MCF 10A (cell line): ENCODE measurements at regions of chr17 and their contacts with region 1.

Region 1: GRCh38 chr17:50397111-50397918 is at the start of gene LRRC59:
- DNase-seq: peak; percentile 82
- H3K4me3 Mint-ChIP-seq: peak within 1 kb of the TSS; percentile 96
- H3K27ac Mint-ChIP-seq: peak within 1 kb of the TSS; percentile 90
- H3K4me1 Mint-ChIP-seq: peaks cover 20% of the 10 kb centered on the region
- H3K27me3 Mint-ChIP-seq: no peaks in the 10 kb centered on the region
- CTCF ChIP-seq: peak; percentile 96
- total RNA-seq, gene LRRC59: 306 and 344 TPM in 2 replicates

Region 2: GRCh38 chr17:49822829-49823228 is 574.5 kb before region 1 on chr17:
- CTCF ChIA-PET with region 1: no interaction called
- POLR2A ChIA-PET with region 1: no interaction called
- intact Hi-C with region 1: no loop called
- DNase-seq: no peak
- H3K4me3 Mint-ChIP-seq: no peak overlapping the region
- H3K27ac Mint-ChIP-seq: no peak overlapping the region
- H3K4me1 Mint-ChIP-seq: no peaks in the 10 kb centered on the region
- H3K27me3 Mint-ChIP-seq: no peaks in the 10 kb centered on the region
- CTCF ChIP-seq: no peak

Region 3: GRCh38 chr17:50345432-50346312 is 51.6 kb before region 1 on chr17 and contains the start of gene XYLT2:
- CTCF ChIA-PET with region 1: interaction called, 3 read pairs
- POLR2A ChIA-PET with region 1: interaction called, 15 read pairs
- intact Hi-C with region 1: no loop called
- DNase-seq: peak; percentile 78
- H3K4me3 Mint-ChIP-seq: peak within 1 kb of the TSS; percentile 88
- H3K27ac Mint-ChIP-seq: peak within 1 kb of the TSS; percentile 90
- H3K4me1 Mint-ChIP-seq: peaks cover 14% of the 10 kb centered on the region
- H3K27me3 Mint-ChIP-seq: no peaks in the 10 kb centered on the region
- CTCF ChIP-seq: no peak
- total RNA-seq, gene XYLT2: 9.6 and 14.0 TPM in 2 replicates

Region 4: DNA sequence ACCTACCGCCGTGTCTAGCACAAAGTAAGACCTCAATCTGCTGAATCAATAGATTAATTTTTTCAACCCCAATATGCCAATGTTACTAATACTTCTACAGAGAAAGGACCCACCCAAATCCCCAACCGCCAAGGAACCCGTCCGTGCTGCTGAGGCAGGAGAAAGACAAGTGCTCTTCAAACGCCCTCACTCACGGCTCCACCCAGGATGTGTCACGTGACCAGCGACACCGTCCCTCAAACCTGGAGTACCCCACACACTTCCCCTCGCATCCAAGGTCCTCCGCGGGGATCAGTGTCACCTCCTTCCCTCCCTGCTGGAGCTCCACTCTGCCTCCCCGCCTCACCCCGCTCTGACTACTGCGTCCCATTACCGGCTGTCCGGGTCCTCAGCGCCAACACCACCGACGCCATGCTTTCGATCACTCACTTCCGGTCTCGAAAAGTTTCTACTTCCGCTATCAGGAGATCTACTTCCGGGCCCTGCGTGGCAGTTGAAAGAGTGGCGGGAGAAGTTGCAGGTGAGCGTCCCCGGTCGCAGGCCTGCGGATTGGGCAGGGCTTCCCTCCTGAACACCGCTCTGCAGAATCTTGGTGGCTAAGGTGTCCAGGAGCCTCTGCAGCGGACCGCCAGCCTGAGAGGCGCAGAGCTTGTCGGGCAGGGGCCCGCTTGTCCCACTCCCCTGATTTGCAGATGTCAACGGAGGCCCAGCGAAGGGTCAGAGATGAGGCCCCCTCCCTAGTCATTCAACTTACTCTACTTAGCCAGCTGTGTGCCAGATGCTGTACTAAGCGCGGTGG is 24.4 kb before region 1 on chr17 and contains the starts of genes EME1 and MRPL27:
- CTCF ChIA-PET with region 1: interaction called, 27 read pairs
- POLR2A ChIA-PET with region 1: interaction called, 54 read pairs
- intact Hi-C with region 1: no loop called
- DNase-seq: peak; percentile 90
- H3K4me3 Mint-ChIP-seq: peak within 1 kb of the TSS; percentile 91
- H3K27ac Mint-ChIP-seq: peak within 1 kb of the TSS; percentile 97
- H3K4me1 Mint-ChIP-seq: peaks cover 12% of the 10 kb centered on the region
- H3K27me3 Mint-ChIP-seq: no peaks in the 10 kb centered on the region
- CTCF ChIP-seq: no peak
- total RNA-seq, gene EME1: 6.0 and 6.7 TPM in 2 replicates
- total RNA-seq, gene MRPL27: 57.2 and 71.5 TPM in 2 replicates

Region 5: GRCh38 chr17:50386510-50386909 is 10.8 kb before region 1 on chr17:
- CTCF ChIA-PET with region 1: interaction called, 37 read pairs
- POLR2A ChIA-PET with region 1: interaction called, 22 read pairs
- intact Hi-C with region 1: no loop called
- DNase-seq: no peak
- H3K4me3 Mint-ChIP-seq: no peak overlapping the region
- H3K27ac Mint-ChIP-seq: no peak overlapping the region
- H3K4me1 Mint-ChIP-seq: peaks cover 5% of the 10 kb centered on the region
- H3K27me3 Mint-ChIP-seq: no peaks in the 10 kb centered on the region
- CTCF ChIP-seq: no peak

Region 6: DNA sequence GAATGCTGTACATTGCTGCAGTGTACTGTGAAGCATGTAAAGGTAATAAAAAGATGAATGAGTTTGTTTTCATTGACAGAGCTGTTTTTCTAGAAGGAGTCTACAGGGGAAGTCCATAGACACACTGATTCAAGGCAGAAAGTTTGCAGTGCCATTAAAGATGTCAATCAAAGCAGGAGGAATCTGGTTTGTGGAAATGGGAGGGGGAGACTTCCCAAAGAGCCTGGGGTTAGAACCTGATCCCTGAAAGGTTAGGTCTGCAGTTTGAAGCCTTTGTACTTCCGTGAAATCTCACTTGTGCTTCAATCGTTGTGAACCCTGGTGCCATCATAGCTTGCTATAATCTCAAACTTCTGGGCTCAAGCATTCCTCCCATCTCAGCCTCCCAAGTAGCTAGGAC is 33.9 kb after region 1 on chr17:
- CTCF ChIA-PET with region 1: interaction called, 37 read pairs
- POLR2A ChIA-PET with region 1: interaction called, 75 read pairs
- intact Hi-C with region 1: no loop called
- DNase-seq: no peak
- H3K4me3 Mint-ChIP-seq: no peak overlapping the region
- H3K27ac Mint-ChIP-seq: no peak overlapping the region
- H3K4me1 Mint-ChIP-seq: peaks cover 15% of the 10 kb centered on the region
- H3K27me3 Mint-ChIP-seq: no peaks in the 10 kb centered on the region
- CTCF ChIP-seq: no peak

Region 7: GRCh38 chr17:50487213-50488096 is 90.1 kb after region 1 on chr17:
- CTCF ChIA-PET with region 1: interaction called, 3 read pairs
- POLR2A ChIA-PET with region 1: interaction called, 11 read pairs
- intact Hi-C with region 1: no loop called
- DNase-seq: peak; percentile 90
- H3K4me3 Mint-ChIP-seq: no peak overlapping the region
- H3K27ac Mint-ChIP-seq: peak overlapping the region; percentile 55
- H3K4me1 Mint-ChIP-seq: peaks cover 27% of the 10 kb centered on the region
- H3K27me3 Mint-ChIP-seq: no peaks in the 10 kb centered on the region
- CTCF ChIP-seq: no peak

Region 8: DNA sequence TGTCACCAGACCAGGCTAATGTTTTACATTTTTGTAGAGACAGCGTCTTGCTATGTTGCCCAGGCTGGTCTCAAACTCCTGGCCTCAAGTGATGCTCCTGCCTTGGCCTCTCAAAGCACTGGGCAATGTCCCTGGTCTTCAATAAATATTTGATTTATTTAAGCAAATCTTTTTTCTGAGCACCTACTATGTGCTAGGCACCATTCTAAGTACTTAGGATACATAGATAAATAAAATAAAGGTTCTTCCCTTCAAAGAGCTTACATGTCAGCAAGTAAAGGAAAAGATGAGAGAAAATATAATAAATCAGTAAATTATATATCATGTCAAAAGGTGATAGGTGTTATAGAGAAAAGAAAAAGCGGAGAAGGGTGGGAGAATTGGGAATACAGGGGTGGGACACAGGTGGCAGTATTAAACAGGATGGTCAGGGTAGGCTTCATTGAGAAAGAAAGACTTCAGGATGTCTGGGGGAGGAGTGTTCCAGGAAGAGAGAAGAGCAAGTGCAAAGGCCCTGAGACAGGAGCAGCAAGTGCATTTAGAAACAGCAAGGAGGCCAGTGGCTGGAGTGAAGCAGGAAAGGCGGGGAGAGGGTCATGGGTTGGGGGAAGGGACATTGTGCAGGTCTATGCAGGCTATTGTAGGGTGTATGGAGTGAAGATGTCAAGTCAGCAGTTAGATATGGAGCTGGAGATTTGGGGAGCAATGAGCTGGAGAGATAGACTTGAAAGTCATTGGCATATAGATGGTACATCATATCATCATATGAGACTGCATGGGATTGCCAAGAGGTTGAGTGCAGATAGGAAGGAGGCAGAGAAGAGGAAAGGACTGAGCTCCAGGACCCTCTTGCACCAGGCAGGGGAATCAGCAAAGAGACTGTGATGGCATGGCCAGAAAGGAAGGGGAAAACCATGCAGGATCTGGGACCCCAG is 248.7 kb after region 1 on chr17:
- CTCF ChIA-PET with region 1: no interaction called
- POLR2A ChIA-PET with region 1: no interaction called
- intact Hi-C with region 1: no loop called
- DNase-seq: no peak
- H3K4me3 Mint-ChIP-seq: no peak overlapping the region
- H3K27ac Mint-ChIP-seq: no peak overlapping the region
- H3K4me1 Mint-ChIP-seq: peaks cover 41% of the 10 kb centered on the region
- H3K27me3 Mint-ChIP-seq: no peaks in the 10 kb centered on the region
- CTCF ChIP-seq: no peak